Activated T-helper 1 cell treated with anti-CD3 and anti-CD28 coated beads, Interleukin-12 subunit alpha, Interleukin-12 subunit beta, Interleukin-2, Interleukin-4 antibody, amounts not matched to agents 30 ng/mL and 10 ng/mL and 1 ng/mL, durations not matched to agents 14 hours and 24 hours and 36 hours (primary cell): ENCODE measurements at regions of chr14 and their contacts with region 1.

Region 1: GRCh38 chr14:55191203-55192053 is at the start of gene DLGAP5:
- DNase-seq: peak; percentile 91
- H3K4me3 Mint-ChIP-seq: peak within 1 kb of the TSS; percentile 94
- H3K27ac Mint-ChIP-seq: peak within 1 kb of the TSS; percentile 66
- H3K4me1 Mint-ChIP-seq: peaks cover 43% of the 10 kb centered on the region
- H3K27me3 Mint-ChIP-seq: no peaks in the 10 kb centered on the region
- total RNA-seq, gene DLGAP5: 22.4 and 26.4 TPM in 2 replicates

Region 2: DNA sequence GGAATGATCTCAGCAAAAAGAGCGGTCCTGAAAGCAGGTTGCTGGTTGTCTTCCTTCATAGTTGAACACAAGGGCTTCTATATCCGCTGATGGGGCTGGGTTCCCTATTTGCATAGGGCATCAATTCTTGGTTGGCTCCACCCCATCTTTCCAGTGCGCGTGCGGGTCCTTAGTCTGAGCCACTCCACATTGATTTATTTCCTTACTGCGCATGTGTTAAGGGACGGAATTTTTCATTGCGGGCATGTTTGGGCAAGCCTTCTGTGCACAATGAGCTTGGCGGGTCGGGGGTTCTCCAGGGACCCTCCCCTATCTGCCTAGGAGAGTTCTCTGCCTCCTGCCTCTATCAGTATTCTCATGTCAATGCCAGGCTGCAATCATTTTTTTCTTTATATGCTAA is 21.2 kb after region 1 on chr14:
- intact Hi-C with region 1: loop called (anchors 1 kb)
- DNase-seq: no peak
- H3K4me3 Mint-ChIP-seq: no peak overlapping the region
- H3K27ac Mint-ChIP-seq: no peak overlapping the region
- H3K4me1 Mint-ChIP-seq: no peaks in the 10 kb centered on the region
- H3K27me3 Mint-ChIP-seq: peaks cover 9% of the 10 kb centered on the region

Region 3: GRCh38 chr14:55411426-55412389 is 220.3 kb after region 1 on chr14 and contains the start of gene ATG14:
- intact Hi-C with region 1: loop called (anchors 1 kb)
- DNase-seq: peak; percentile 70
- H3K4me3 Mint-ChIP-seq: peak within 1 kb of the TSS; percentile 89
- H3K27ac Mint-ChIP-seq: peak within 1 kb of the TSS; percentile 85
- H3K4me1 Mint-ChIP-seq: peaks cover 29% of the 10 kb centered on the region
- H3K27me3 Mint-ChIP-seq: no peaks in the 10 kb centered on the region
- total RNA-seq, gene ATG14: 4.8 and 6.2 TPM in 2 replicates